GM12878 (cell line): ENCODE measurements at regions of chr7 and their contacts with region 1.

Region 1: DNA sequence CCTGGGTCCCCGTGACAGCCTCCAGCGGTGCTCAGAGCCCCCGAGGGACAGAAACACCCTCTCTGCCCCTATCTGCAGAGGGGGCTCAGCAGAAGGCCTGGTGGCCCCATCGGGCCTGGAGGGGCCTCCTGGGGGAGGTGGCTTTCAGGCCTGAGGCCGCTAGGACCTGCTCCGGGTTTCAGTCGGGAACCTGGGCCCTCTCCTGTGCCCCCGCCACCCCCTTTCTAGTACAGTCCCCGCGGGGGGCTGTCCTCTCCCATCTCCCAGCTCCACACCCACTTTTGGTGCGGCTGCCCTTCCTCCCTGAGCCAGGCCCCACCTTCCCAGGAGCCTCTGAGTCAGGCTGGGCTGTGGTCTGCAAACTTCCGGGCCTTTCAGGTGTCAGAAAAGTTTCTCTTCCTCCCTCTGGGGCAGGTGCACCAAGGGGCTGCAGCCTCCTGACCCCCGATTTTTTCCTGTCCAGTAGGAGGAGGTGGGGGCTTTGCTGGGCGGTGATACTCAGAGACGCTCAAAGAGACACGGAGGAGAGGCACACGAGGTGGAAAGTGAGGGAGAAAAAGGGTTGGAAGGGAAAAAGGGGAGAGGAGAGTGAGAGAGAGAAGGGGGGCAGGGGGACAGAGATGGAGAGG is 692 bp downstream of the CARD11 start:
- DNase-seq: no peak
- ATAC-seq: peak; percentile 80
- H3K4me3 ChIP-seq: peak overlapping the region; percentile 100
- H3K27ac ChIP-seq: peak overlapping the region; percentile 69
- H3K4me1 ChIP-seq: peaks cover 28% of the 10 kb centered on the region
- H3K27me3 ChIP-seq: no peaks in the 10 kb centered on the region
- CTCF ChIP-seq: no peak
- EP300 ChIP-seq: 0 out of 4 replicates have a peak, but pooled peaks of 1 of the 2 experiments have one; percentile 17
- POLR2A ChIP-seq: no peak
- RAD21 ChIP-seq: 0 out of 2 replicates have a peak, but pooled peaks have one; percentile 8

Region 2: DNA sequence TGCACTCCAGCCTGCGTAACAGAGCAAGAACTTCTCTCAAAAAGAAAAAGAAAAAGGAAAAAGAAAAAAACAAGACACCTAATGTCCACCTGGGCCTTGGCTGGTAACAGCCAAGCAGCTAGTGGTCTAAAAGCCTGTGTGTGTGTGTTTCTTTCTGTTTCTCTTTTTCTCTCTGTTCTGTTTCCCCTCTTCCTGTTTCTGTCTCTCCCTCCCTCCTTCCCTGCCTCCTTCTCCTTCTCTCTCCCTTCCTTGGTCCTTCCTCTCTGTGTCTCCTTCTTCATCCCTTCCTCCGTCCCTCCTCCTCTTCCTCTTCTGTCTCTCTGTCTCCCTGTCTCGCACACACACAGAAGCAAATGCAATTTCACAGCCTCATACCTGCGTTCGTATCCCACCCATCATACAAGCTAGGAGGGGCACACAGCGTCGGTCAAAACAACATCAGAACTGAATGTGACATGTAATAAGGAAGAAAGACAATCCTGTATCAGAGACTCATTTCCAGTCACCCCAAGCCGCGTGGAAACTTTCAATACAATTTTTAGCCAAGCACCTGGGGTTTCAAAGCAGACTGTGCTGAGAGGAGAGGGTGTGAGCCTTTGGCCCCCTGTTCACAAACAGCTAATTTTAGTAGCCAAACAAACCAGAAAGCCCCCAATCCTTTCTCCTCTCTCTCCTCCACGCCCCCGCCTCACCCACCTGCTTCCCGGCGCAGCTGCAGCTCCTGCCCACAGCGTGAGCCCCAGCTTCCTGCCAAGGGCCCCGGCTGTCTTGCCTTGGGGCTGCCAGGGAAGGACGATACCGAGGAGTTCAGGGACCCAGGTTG is 148.6 kb before region 1 on chr7:
- CTCF ChIA-PET with region 1: interaction called, 7 read pairs
- POLR2A ChIA-PET with region 1: no interaction called
- RAD21 ChIA-PET with region 1: interaction called, 14 read pairs
- SMC1A ChIA-PET with region 1: interaction called, 14 read pairs
- in situ Hi-C with region 1: no loop called
- intact Hi-C with region 1: loop called (anchors 5 kb)
- DNase-seq: peak; percentile 51
- ATAC-seq: peak; percentile 86
- H3K4me3 ChIP-seq: peak overlapping the region; percentile 51
- H3K27ac ChIP-seq: peak overlapping the region; percentile 84
- H3K4me1 ChIP-seq: peaks cover 23% of the 10 kb centered on the region
- H3K27me3 ChIP-seq: no peaks in the 10 kb centered on the region
- CTCF ChIP-seq: no peak
- EP300 ChIP-seq: peak; percentile 37 to 73; a peak in 1 of 4 replicates
- POLR2A ChIP-seq: peak; percentile 54
- RAD21 ChIP-seq: no peak

Region 3: DNA sequence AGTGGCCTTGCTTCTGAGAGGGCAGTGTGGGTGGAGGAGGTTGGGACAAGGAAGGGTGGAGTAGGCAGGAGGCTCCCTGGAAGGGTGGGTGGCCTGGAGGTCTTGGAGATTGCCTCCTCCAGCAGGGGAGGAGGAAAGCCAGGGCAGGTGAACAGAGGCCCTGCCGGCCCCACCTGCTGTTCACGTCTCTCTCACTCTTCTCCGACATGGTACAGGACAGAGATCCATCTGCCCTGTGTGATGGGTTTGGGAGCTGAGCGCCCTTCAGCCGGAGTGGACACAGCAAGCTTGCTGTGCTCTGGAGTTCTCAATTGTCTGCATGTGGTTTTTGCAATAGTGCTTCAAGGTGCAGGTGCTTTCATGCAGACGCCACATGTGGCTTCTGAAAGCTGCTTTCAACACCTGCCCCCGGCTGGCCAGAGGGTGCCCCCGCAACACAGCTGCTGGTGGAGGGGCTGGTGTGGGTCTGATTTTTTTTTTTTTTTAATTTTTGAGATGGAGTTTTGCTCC is 116.0 kb before region 1 on chr7:
- CTCF ChIA-PET with region 1: no interaction called
- POLR2A ChIA-PET with region 1: no interaction called
- RAD21 ChIA-PET with region 1: no interaction called
- SMC1A ChIA-PET with region 1: no interaction called
- in situ Hi-C with region 1: no loop called
- intact Hi-C with region 1: no loop called
- DNase-seq: no peak
- ATAC-seq: no peak; the same call in 2 of the 3 replicates
- H3K4me3 ChIP-seq: no peak overlapping the region
- H3K27ac ChIP-seq: no peak overlapping the region
- H3K4me1 ChIP-seq: no peaks in the 10 kb centered on the region
- H3K27me3 ChIP-seq: no peaks in the 10 kb centered on the region
- CTCF ChIP-seq: no peak
- EP300 ChIP-seq: no peak
- POLR2A ChIP-seq: no peak
- RAD21 ChIP-seq: no peak

Region 4: GRCh38 chr7:2971914-2972834 is 70.8 kb before region 1 on chr7:
- CTCF ChIA-PET with region 1: interaction called, 19 read pairs
- POLR2A ChIA-PET with region 1: no interaction called
- RAD21 ChIA-PET with region 1: interaction called, 22 read pairs
- SMC1A ChIA-PET with region 1: interaction called, 22 read pairs
- in situ Hi-C with region 1: no loop called
- intact Hi-C with region 1: no loop called
- DNase-seq: peak; percentile 57
- ATAC-seq: peak; percentile 89
- H3K4me3 ChIP-seq: no peak overlapping the region
- H3K27ac ChIP-seq: peak overlapping the region; percentile 20
- H3K4me1 ChIP-seq: peaks cover 19% of the 10 kb centered on the region
- H3K27me3 ChIP-seq: no peaks in the 10 kb centered on the region
- CTCF ChIP-seq: no peak
- EP300 ChIP-seq: no peak; a peak in 1 of 4 replicates
- POLR2A ChIP-seq: no peak
- RAD21 ChIP-seq: no peak

Region 5: GRCh38 chr7:2978403-2978802 is 64.6 kb before region 1 on chr7:
- CTCF ChIA-PET with region 1: interaction called, 19 read pairs
- POLR2A ChIA-PET with region 1: interaction called, 13 read pairs
- RAD21 ChIA-PET with region 1: interaction called, 22 read pairs
- SMC1A ChIA-PET with region 1: interaction called, 22 read pairs
- in situ Hi-C with region 1: no loop called
- intact Hi-C with region 1: loop called (anchors 2 kb)
- DNase-seq: peak; percentile 91
- ATAC-seq: peak; percentile 93
- H3K4me3 ChIP-seq: peak overlapping the region; percentile 60
- H3K27ac ChIP-seq: peak overlapping the region; percentile 78
- H3K4me1 ChIP-seq: peaks cover 44% of the 10 kb centered on the region
- H3K27me3 ChIP-seq: no peaks in the 10 kb centered on the region
- CTCF ChIP-seq: no peak
- EP300 ChIP-seq: peak; percentile 88 to 92; a peak in 3 of 4 replicates
- POLR2A ChIP-seq: no peak
- RAD21 ChIP-seq: no peak

Region 6: DNA sequence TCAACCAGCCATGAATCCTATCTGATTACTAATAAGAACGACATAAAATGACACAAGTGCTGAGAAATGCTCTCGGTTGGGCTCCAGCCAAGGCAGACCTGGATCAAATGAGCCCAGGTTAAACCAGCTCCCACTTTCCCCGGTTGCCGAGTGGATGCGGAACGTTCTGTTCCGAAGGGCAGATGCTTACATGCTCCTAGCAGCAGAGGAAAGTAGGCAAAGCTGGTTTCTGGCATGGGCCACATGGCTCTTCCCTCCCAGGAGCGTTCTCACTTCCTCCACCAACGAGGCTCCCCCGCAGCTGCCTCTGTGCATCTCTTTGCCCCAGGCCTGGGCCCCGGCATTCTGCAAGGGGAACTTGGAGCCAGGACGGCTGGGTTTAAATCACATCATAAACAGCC is 196.3 kb after region 1 on chr7:
- CTCF ChIA-PET with region 1: no interaction called
- POLR2A ChIA-PET with region 1: no interaction called
- RAD21 ChIA-PET with region 1: no interaction called
- SMC1A ChIA-PET with region 1: no interaction called
- in situ Hi-C with region 1: no loop called
- intact Hi-C with region 1: no loop called
- DNase-seq: no peak
- ATAC-seq: no peak
- H3K4me3 ChIP-seq: no peak overlapping the region
- H3K27ac ChIP-seq: no peak overlapping the region
- H3K4me1 ChIP-seq: no peaks in the 10 kb centered on the region
- H3K27me3 ChIP-seq: no peaks in the 10 kb centered on the region
- CTCF ChIP-seq: no peak
- EP300 ChIP-seq: no peak
- POLR2A ChIP-seq: no peak
- RAD21 ChIP-seq: no peak